ENCODE measurements at regions of chr20 and their contacts with region 1.

Region 1: DNA sequence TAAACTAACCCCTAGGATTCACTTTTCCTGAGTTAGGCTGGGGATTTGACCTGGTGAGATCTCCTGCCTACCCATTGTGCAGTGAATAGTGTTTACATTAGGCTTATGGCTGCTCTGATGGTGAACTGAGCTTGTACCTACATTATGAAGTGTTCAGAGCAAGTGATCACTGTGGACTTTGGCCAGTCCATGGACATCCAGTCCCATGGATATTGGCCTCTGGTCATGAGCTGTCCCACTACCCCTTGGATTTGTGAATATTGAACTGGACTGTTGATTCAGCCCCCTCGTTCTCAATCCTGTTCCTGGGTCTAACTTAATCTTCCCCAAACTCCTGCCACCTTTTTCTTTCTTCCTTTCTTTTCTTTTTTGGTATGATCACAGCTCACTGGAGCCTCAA is 13.8 kb downstream of the ASIP start:
- DNase-seq: no peak
- H3K4me3 ChIP-seq: no peak overlapping the region
- H3K27ac ChIP-seq: no peak overlapping the region
- H3K4me1 ChIP-seq: no peaks in the 10 kb centered on the region
- H3K27me3 ChIP-seq: no peaks in the 10 kb centered on the region
- CTCF ChIP-seq: no peak

Region 2: GRCh38 chr20:33883164-33883563 is 371.8 kb before region 1 on chr20:
- CTCF ChIA-PET with region 1: no interaction called
- dilution Hi-C with region 1: no loop called
- in situ Hi-C with region 1: no loop called
- intact Hi-C with region 1: no loop called
- DNase-seq: no peak
- H3K4me3 ChIP-seq: no peak overlapping the region
- H3K27ac ChIP-seq: no peak overlapping the region
- H3K4me1 ChIP-seq: no peaks in the 10 kb centered on the region
- H3K27me3 ChIP-seq: no peaks in the 10 kb centered on the region
- CTCF ChIP-seq: no peak

Region 3: GRCh38 chr20:34199183-34199582 is 55.8 kb before region 1 on chr20:
- CTCF ChIA-PET with region 1: no interaction called
- dilution Hi-C with region 1: no loop called
- in situ Hi-C with region 1: no loop called
- intact Hi-C with region 1: no loop called
- DNase-seq: no peak
- H3K4me3 ChIP-seq: no peak overlapping the region
- H3K27ac ChIP-seq: no peak overlapping the region
- H3K4me1 ChIP-seq: no peaks in the 10 kb centered on the region
- H3K27me3 ChIP-seq: peaks cover 7% of the 10 kb centered on the region
- CTCF ChIP-seq: no peak

Region 4: GRCh38 chr20:34538671-34539123 is 283.7 kb after region 1 on chr20:
- CTCF ChIA-PET with region 1: no interaction called
- dilution Hi-C with region 1: no loop called
- in situ Hi-C with region 1: no loop called
- intact Hi-C with region 1: loop called (anchors 5 kb)
- DNase-seq: peak; percentile 32
- H3K4me3 ChIP-seq: no peak overlapping the region
- H3K27ac ChIP-seq: no peak overlapping the region
- H3K4me1 ChIP-seq: no peaks in the 10 kb centered on the region
- H3K27me3 ChIP-seq: no peaks in the 10 kb centered on the region
- CTCF ChIP-seq: peak; percentile 86 to 88

Region 5: GRCh38 chr20:34704177-34705007 is 449.4 kb after region 1 on chr20 and contains the start of gene TP53INP2:
- CTCF ChIA-PET with region 1: no interaction called
- dilution Hi-C with region 1: no loop called
- in situ Hi-C with region 1: no loop called
- intact Hi-C with region 1: loop called (anchors 1 kb)
- DNase-seq: peak; percentile 69
- H3K4me3 ChIP-seq: peak within 1 kb of the TSS; percentile 49 to 78 (median 61)
- H3K27ac ChIP-seq: peak within 1 kb of the TSS; percentile 52
- H3K4me1 ChIP-seq: peaks cover 35% of the 10 kb centered on the region
- H3K27me3 ChIP-seq: no peaks in the 10 kb centered on the region
- CTCF ChIP-seq: no peak
- total RNA-seq, gene TP53INP2: 2.5 to 4.4 TPM

Region 6: GRCh38 chr20:34768096-34768495 is 513.1 kb after region 1 on chr20:
- CTCF ChIA-PET with region 1: no interaction called
- dilution Hi-C with region 1: no loop called
- in situ Hi-C with region 1: no loop called
- intact Hi-C with region 1: loop called (anchors 2 kb)
- DNase-seq: no peak
- H3K4me3 ChIP-seq: no peak overlapping the region
- H3K27ac ChIP-seq: no peak overlapping the region
- H3K4me1 ChIP-seq: no peaks in the 10 kb centered on the region
- H3K27me3 ChIP-seq: no peaks in the 10 kb centered on the region
- CTCF ChIP-seq: no peak